ENCODE measurements at regions of chr5 and their contacts with region 1.

Region 1: DNA sequence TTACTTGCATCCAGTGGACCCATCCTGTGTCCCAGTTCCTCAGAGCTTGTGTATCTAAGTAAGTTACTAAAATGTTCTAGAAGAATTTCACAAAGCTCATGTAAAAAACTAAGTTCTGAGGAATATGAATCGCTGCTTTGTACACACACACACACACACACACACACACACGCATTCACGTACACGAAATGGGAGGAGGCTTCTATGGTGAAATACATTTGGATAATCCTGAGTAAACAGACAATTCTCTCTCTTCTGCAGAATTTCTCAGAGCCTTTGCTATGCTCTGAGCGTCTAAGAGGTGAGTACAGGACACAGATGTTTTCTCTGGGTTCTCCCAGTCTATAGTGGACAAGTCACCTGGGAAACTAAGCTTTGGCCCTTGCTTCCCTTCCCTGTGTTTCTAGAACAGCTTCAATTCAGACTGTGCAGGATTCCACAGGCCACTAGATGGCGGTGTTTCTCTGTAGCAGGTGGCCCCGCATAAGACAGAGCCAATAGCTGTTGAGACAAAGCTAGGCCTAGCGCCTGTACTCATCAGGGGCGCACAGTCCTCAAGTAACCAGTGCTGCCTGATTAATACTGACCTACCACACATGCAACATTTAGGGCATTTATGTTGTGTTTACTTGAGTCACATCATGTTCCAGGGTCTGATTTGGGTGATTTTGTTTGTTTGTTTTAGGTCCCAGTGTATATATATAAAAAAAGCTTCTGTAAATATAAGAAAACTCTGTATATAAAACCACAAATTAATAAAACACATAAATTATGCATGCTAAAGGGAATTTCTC is 114.8 kb downstream of the LIFR start:
- DNase-seq: no peak
- H3K4me3 ChIP-seq: no peak overlapping the region
- CTCF ChIP-seq: peak; percentile 91

Region 2: DNA sequence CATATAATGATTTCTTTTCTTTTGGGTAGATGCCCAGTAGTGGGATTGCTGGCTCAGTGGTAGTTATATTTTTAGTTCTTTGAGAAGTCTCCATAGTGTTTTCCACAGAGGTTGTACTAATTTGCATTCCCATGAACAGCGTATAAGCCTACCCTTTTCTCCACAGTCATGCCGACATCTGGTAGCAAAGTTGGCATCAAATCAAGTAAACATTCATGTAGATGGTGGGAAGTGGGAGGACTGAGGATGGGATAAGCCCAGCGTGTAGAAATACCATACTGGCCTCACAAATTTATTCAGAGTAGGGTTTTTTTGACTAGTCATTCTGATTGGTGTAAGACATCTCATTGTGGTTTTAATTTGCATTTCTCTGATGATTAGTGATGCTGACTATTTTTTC is 67.9 kb before region 1 on chr5:
- CTCF ChIA-PET with region 1: no interaction called
- POLR2A ChIA-PET with region 1: no interaction called
- DNase-seq: peak; percentile 7
- H3K4me3 ChIP-seq: no peak overlapping the region
- CTCF ChIP-seq: no peak

Region 3: GRCh38 chr5:38453506-38453905 is 11.9 kb after region 1 on chr5:
- CTCF ChIA-PET with region 1: interaction called, 37 read pairs
- POLR2A ChIA-PET with region 1: no interaction called
- DNase-seq: no peak
- H3K4me3 ChIP-seq: no peak overlapping the region
- CTCF ChIP-seq: no peak

Region 4: GRCh38 chr5:38540314-38540713 is 98.7 kb after region 1 on chr5:
- CTCF ChIA-PET with region 1: interaction called, 13 read pairs
- POLR2A ChIA-PET with region 1: no interaction called
- DNase-seq: no peak
- H3K4me3 ChIP-seq: no peak overlapping the region
- CTCF ChIP-seq: no peak

Region 5: GRCh38 chr5:38666668-38667498 is 225.2 kb after region 1 on chr5:
- CTCF ChIA-PET with region 1: interaction called, 46 read pairs
- POLR2A ChIA-PET with region 1: no interaction called
- DNase-seq: no peak
- H3K4me3 ChIP-seq: no peak overlapping the region
- CTCF ChIP-seq: peak; percentile 70

Region 6: DNA sequence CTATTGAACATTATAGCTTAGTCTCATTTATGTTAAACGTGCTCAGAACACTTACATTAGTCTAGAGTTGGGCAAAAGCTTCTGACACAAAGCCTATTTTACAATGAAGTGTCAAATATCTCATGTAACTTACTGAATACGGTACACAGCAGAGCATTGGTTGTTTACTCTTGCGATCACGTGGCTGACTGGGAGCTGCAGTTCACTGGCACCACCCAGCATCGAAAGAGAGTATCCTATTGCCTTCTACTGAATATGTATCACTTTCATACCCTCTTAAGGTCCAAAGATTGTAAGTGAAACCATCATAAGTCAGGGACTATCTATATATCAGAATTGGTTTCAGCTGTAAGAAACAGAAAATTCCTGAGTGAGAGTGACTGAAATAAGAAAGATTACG is 361.6 kb after region 1 on chr5:
- CTCF ChIA-PET with region 1: interaction called, 304 read pairs
- POLR2A ChIA-PET with region 1: interaction called, 13 read pairs
- DNase-seq: no peak
- H3K4me3 ChIP-seq: no peak overlapping the region
- CTCF ChIP-seq: no peak

Region 7: GRCh38 chr5:38922199-38922598 is 480.5 kb after region 1 on chr5:
- CTCF ChIA-PET with region 1: interaction called, 13 read pairs
- POLR2A ChIA-PET with region 1: no interaction called
- DNase-seq: no peak
- H3K4me3 ChIP-seq: no peak overlapping the region
- CTCF ChIP-seq: peak; percentile 64